Activated CD8-positive, alpha-beta memory T cell treated with anti-CD3 and anti-CD28 coated beads, Interleukin-2, amount 10 ng/mL, durations not matched to agents 7 days and 5 days (primary cell): ENCODE measurements at regions of chr6 and their contacts with region 1.

Region 1: DNA sequence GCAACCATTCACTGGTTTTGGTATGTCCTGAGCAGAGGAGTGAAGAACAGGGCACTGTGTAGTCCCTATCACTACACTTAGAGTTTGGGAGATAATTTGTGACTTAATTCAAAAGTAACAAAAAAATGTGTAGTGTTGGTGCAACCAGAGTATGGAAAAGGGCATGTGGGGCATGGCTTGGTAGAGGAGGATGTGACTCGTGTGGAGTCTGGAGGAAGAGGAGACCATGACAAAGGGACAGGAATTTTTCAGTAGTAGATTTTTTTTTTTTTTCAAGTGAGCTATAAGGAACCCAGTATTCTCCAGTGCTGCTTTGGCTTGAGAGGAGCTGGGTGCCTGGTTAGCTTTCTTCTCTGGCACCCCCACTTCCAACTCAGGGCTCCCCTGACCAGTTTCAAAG is 5.1 kb downstream of the MTRES1 start:
- DNase-seq: no peak
- ATAC-seq: no peak
- H3K4me3 Mint-ChIP-seq: no peak overlapping the region
- H3K27ac Mint-ChIP-seq: no peak overlapping the region
- H3K4me1 Mint-ChIP-seq: peaks cover 32% of the 10 kb centered on the region
- H3K27me3 Mint-ChIP-seq: no peaks in the 10 kb centered on the region

Region 2: GRCh38 chr6:107061125-107062020 is 28.2 kb after region 1 on chr6:
- CTCF ChIA-PET with region 1: interaction called, 10 read pairs
- DNase-seq: peak; percentile 48
- ATAC-seq: peak; percentile 61
- H3K4me3 Mint-ChIP-seq: peak overlapping the region; percentile 61
- H3K27ac Mint-ChIP-seq: peak overlapping the region; percentile 80
- H3K4me1 Mint-ChIP-seq: peaks cover 53% of the 10 kb centered on the region
- H3K27me3 Mint-ChIP-seq: no peaks in the 10 kb centered on the region

Region 3: GRCh38 chr6:107114213-107114905 is 81.2 kb after region 1 on chr6:
- CTCF ChIA-PET with region 1: interaction called, 59 read pairs
- DNase-seq: peak; percentile 76
- ATAC-seq: peak; percentile 79
- H3K4me3 Mint-ChIP-seq: peak overlapping the region; percentile 68
- H3K27ac Mint-ChIP-seq: peak overlapping the region; percentile 51
- H3K4me1 Mint-ChIP-seq: peaks cover 23% of the 10 kb centered on the region
- H3K27me3 Mint-ChIP-seq: peaks cover 18% of the 10 kb centered on the region